ENCODE measurements at regions of chr17 and their contacts with region 1.

Region 1: DNA sequence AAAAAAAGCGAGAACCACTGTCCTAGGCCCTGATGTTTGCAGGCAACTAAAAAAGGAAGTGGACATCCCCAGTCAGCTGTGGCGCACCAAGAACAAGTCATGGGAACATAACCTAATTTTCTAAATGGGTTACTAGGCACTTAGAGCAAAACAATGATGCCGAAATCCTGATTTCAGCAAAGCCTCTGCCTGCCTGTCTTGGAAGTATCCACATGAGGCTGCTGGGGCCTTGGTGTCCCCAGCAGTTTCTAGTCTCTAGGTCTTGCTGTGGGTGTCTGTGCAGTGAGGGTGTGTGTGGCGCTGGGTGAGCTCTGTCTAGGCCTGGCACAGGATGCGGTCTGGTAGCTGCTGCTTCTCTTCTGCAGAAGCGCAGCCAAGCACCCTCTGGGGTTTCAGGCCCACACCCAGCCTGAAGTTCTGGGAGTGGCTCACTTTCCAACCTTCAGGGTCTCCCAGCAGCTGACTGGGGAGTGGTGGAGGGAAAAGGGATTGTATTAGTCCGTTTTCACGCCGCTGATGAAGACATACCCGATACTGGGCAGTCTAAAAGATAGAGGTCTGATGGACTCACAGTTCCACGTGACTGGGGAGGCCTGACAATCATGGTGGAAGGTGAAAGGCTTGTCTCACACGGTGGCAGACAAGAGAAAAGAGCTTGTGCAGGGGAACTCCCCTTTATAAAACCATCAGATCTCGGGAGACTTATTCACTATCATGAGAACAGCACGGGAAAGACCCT is 21.1 kb downstream of the STH start:
- DNase-seq: peak; percentile 72
- H3K4me3 Mint-ChIP-seq: peak overlapping the region; percentile 13
- H3K27ac Mint-ChIP-seq: peak overlapping the region; percentile 76
- H3K4me1 Mint-ChIP-seq: peaks cover 24% of the 10 kb centered on the region
- H3K27me3 Mint-ChIP-seq: no peaks in the 10 kb centered on the region

Region 2: DNA sequence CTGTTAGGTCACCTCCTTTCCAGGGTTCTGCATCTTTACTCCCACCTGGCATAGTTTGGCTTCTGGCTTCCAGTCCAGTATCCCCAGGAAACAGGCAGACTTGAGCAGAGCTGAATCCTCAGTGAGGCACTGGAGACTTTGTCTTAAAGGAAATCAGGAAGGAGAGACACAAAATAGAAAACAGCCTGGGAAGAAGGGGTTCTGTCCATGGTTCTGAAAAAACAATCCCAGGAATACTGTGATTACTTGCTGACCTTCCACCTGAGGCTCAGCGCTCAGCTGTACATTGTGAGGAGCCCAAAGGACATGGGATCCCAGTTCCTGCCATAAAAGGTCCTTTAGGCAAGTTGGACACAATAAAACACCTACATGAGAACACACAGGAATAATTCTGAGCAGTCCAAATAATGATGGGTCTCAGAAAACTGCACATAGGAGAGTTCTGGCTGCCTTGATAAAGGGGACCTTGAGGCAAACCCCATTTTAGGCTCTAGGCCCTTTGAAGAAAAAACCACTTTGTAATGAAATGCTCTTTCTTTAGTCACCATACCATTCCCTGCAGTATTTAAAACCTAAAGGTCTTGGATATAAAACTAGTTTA is 317.4 kb before region 1 on chr17:
- CTCF ChIA-PET with region 1: no interaction called
- POLR2A ChIA-PET with region 1: no interaction called
- intact Hi-C with region 1: no loop called
- DNase-seq: no peak
- H3K4me3 Mint-ChIP-seq: no peak overlapping the region
- H3K27ac Mint-ChIP-seq: no peak overlapping the region
- H3K4me1 Mint-ChIP-seq: peaks cover 3% of the 10 kb centered on the region
- H3K27me3 Mint-ChIP-seq: peaks cover 20% of the 10 kb centered on the region

Region 3: DNA sequence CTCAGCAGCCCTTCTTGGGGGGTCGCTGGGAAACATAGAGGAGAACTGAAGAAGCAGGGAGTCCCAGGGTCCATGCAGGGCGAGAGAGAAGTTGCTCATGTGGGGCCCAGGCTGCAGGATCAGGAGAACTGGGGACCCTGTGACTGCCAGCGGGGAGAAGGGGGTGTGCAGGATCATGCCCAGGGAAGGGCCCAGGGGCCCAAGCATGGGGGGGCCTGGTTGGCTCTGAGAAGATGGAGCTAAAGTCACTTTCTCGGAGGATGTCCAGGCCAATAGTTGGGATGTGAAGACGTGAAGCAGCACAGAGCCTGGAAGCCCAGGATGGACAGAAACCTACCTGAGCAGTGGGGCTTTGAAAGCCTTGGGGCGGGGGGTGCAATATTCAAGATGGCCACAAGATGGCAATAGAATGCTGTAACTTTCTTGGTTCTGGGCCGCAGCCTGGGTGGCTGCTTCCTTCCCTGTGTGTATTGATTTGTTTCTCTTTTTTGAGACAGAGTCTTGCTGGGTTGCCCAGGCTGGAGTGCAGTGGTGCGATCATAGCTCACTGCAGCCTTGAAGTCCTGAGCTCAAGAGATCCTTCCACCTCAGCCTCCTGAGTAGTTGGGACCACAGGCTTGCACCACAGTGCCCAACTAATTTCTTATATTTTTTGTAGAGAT is 17.8 kb before region 1 on chr17:
- CTCF ChIA-PET with region 1: interaction called, 12 read pairs
- POLR2A ChIA-PET with region 1: no interaction called
- intact Hi-C with region 1: no loop called
- DNase-seq: peak; percentile 82
- H3K4me3 Mint-ChIP-seq: no peak overlapping the region
- H3K27ac Mint-ChIP-seq: no peak overlapping the region
- H3K4me1 Mint-ChIP-seq: no peaks in the 10 kb centered on the region
- H3K27me3 Mint-ChIP-seq: no peaks in the 10 kb centered on the region

Measured in activated CD4-positive, alpha-beta memory T cell treated with anti-CD3 and anti-CD28 coated beads for 36 hours (primary cell).